MCF 10A (cell line): ENCODE measurements at regions of chr4 and their contacts with region 1.

Region 1: DNA sequence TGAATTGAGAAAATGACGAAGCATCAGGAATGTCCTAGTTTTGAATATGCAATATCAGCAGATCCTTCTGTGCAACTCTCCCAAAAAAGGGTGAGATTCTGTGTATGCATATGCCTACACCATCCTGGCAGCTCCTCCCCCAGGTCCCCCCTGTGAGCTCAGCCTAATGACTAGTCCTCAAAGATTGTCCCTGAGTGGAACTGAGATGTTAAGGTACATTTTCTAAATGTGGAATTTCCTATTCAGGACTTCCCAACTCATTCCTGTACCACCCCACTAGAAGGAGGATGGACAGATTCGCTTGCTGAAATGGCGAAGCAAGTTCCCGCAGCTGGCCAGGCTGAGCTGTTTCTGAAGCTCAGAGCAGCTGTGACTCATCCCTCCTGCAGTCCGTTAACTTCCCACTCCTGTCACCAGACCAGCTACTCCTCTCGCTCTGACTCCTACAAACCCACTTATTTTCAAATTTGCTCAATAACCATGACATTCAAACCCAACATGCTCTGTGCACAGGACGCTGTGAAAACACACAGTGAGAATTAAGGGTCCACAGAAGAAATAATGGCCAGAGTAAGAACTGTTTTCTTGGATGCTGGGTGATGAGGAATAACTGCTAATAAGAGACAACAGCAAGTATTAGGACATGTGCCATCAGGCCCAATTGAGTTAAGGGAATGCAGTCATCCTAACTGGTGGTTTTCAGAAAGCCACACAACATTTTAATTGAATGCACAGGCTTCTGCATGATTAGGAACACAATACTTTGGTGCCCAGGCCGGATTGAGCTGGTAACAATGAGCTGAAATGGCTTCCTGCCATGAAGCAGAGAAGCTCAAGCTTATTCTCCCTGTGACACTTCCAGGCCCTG is 40.0 kb upstream of the IRF2 start:
- DNase-seq: peak; percentile 53
- H3K4me3 Mint-ChIP-seq: no peak overlapping the region
- H3K27ac Mint-ChIP-seq: no peak overlapping the region
- H3K4me1 Mint-ChIP-seq: no peaks in the 10 kb centered on the region
- H3K27me3 Mint-ChIP-seq: no peaks in the 10 kb centered on the region
- CTCF ChIP-seq: no peak

Region 2: GRCh38 chr4:184528051-184528450 is 13.7 kb after region 1 on chr4:
- CTCF ChIA-PET with region 1: interaction called, 4 read pairs
- POLR2A ChIA-PET with region 1: interaction called, 14 read pairs
- intact Hi-C with region 1: no loop called
- DNase-seq: no peak
- H3K4me3 Mint-ChIP-seq: no peak overlapping the region
- H3K27ac Mint-ChIP-seq: no peak overlapping the region
- H3K4me1 Mint-ChIP-seq: peaks cover 6% of the 10 kb centered on the region
- H3K27me3 Mint-ChIP-seq: no peaks in the 10 kb centered on the region
- CTCF ChIP-seq: no peak

Region 3: DNA sequence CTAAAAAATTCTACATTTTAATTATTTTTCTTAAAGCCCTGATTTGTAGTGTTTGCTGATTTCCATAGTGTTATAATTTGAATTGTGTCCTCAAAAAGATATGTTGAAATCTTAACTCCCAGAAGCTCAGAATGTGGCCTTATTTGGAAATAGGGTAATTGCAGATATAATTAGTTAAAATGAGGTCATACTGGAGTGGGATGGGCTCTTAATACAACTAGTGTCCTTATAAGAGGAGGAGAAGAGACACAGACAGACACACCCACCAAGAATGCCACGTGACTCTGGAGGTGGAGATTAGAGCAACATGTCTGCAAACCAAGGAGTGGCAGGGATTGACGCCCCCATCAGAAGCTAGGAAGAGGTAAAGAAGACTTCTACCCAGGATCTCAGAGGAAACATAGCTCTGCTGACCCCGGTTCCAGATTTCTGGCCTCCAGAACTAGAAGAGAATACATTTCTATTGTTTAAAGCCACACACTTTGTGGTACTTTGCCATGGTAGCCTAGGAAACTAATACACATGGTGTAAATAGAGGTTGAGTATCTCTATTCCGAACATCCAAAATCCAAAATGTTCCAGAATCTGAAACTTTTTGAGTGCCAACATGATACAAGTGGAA is 30.5 kb after region 1 on chr4:
- CTCF ChIA-PET with region 1: no interaction called
- POLR2A ChIA-PET with region 1: no interaction called
- intact Hi-C with region 1: no loop called
- DNase-seq: peak; percentile 6
- H3K4me3 Mint-ChIP-seq: no peak overlapping the region
- H3K27ac Mint-ChIP-seq: no peak overlapping the region
- H3K4me1 Mint-ChIP-seq: no peaks in the 10 kb centered on the region
- H3K27me3 Mint-ChIP-seq: no peaks in the 10 kb centered on the region
- CTCF ChIP-seq: no peak

Region 4: DNA sequence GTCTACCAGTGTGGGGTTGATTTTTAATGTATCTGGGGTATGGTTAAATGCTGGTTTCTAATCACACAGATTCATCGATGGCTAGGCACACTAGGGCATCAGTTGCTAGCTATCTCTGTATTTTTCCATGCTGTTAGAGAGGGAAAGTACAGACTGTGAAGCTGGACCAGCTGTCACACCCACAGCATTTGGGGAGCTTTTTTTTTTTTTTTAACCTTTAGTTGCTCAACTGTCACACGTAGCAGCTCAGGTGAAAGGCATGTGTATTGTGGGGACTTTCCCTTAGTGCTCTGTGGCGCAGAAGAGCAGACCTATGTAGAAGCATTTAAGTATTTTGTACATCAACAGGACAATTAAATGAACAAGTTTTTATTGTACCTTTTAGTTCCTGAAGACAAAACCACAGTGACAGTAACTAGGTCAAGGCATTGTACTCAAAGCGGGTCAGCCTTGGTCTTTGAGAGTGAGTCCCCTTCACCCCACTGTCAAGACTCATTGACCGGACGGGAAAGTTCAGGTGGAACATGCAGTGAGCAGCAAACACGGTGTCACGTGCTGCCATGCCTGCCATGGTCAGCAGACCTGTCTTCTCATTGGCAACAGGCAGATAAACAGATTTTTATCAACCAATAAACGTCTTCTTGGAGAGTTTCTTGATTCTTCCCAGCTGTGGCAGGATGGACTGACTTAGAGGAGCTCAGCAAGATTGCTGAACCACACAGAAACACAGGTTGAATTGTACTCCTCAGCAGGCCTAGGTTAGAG is 69.6 kb after region 1 on chr4:
- CTCF ChIA-PET with region 1: no interaction called
- POLR2A ChIA-PET with region 1: no interaction called
- intact Hi-C with region 1: loop called (anchors 2 kb)
- DNase-seq: no peak
- H3K4me3 Mint-ChIP-seq: no peak overlapping the region
- H3K27ac Mint-ChIP-seq: no peak overlapping the region
- H3K4me1 Mint-ChIP-seq: no peaks in the 10 kb centered on the region
- H3K27me3 Mint-ChIP-seq: no peaks in the 10 kb centered on the region
- CTCF ChIP-seq: no peak